ENCODE measurements at regions of chr22 and their contacts with region 1.

Region 1: GRCh38 chr22:46798366-46799350 is 36.2 kb downstream of the TBC1D22A start:
- DNase-seq: peak; percentile 90
- H3K4me3 ChIP-seq: peak overlapping the region in 1 of 2 experiments; percentile 27; a peak in 1 of 4 replicates
- H3K27ac ChIP-seq: no peak overlapping the region
- H3K4me1 ChIP-seq: peaks cover 0 to 3% of the 10 kb centered on the region in 2 experiments; a peak in 1 of 4 replicates
- H3K27me3 ChIP-seq: no peaks in the 10 kb centered on the region
- CTCF ChIP-seq: peak; percentile 95
- EP300 ChIP-seq: no peak
- RAD21 ChIP-seq: peak; percentile 96

Region 2: DNA sequence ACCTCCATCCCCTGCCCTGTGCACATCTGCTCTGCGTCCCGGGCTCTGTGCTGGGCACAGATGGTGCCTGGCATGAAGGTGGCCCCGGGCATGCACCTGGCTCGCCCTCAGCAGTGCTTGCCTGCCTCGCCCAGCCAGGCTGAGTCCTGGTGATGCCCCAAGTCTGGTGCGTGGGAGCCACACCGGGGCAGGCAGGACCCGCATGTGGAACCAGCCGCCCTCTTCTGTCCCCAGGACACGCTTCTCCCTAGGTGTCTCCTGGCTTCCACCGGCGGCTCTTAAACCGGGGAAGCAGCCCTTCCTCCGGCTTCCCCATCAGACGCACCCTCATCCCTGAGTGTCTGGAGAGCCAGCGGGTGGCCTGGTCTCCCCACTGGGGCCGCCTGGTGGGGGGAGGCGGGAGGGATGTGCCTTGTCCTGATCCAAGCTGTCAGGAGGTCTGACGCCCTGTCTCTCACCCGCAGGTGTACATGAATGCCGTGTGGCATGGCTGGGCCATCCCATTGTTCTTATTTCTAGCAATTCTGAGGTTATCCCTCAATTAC is 133.4 kb before region 1 on chr22:
- CTCF ChIA-PET with region 1: no interaction called
- POLR2A ChIA-PET with region 1: no interaction called
- DNase-seq: no peak
- H3K4me3 ChIP-seq: no peak overlapping the region
- H3K27ac ChIP-seq: no peak overlapping the region
- H3K4me1 ChIP-seq: peaks cover 0 to 37% of the 10 kb centered on the region in 2 experiments; a peak in 2 of 4 replicates
- H3K27me3 ChIP-seq: no peaks in the 10 kb centered on the region
- CTCF ChIP-seq: no peak
- EP300 ChIP-seq: no peak
- RAD21 ChIP-seq: no peak

Region 3: DNA sequence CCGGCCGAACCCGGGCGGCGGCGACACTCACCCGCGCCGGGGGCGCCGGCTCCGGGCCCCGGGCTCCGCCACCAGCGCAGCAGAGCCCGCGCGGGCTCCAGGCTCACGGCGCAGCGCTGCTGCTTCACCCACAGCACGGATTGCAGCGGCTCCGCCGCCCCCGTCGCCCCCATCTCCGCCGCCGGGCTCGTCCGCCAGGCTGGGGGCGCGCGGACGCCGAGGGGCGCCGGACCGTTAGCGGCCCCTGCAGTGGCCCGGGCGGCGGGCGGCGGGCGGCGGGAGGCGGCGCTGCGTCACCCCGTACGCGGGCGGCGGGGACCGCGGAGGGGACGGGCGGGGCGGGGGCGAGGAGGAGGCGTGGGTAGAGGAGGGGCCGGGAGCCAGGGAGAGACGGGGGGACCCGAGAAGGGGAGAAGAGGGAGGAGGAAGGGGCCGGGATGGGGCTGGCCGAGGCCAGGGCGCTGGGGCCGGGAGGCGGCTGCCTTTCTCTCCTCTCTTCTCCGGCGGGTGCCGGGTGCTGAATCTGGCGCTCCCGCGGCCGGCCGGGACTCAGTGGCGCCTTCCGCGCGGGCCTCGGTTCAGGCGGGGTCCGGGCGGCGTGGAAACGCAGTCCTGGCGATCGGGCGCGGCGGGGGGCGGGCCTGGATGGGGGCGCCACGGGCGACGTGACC is 60.5 kb before region 1 on chr22 and contains the start of gene CERK:
- CTCF ChIA-PET with region 1: no interaction called
- POLR2A ChIA-PET with region 1: no interaction called
- DNase-seq: peak; percentile 95
- H3K4me3 ChIP-seq: peak within 1 kb of the TSS; percentile 67 to 96
- H3K27ac ChIP-seq: peak within 1 kb of the TSS; percentile 52 to 90; a peak in 3 of 4 replicates
- H3K4me1 ChIP-seq: peaks cover 22 to 69% of the 10 kb centered on the region in 2 experiments
- H3K27me3 ChIP-seq: no peaks in the 10 kb centered on the region
- CTCF ChIP-seq: no peak; the same call in 1 of the 2 replicates
- EP300 ChIP-seq: no peak
- RAD21 ChIP-seq: no peak
- polyA plus RNA-seq, gene CERK: 32.6 and 33.4 TPM in 2 replicates

Region 4: DNA sequence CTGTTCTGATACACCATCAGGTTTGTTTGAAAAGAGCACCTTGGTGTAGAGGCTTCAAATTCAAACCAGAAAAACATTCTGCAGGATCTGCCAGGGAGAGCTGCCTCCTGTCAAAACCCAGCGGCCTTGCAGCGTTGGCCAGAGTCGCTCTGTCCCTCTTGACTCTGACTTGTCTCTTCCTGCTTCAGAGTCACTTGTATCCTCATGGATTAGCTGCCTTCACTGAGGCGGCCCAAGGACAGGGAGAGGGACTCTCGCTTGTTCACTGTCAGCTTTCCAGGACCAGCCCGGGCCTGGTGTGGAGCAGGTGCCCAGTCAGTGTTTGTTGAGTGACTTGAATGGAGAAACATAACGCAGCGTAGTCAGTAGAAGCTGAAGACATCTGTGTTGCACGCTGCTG is 18.2 kb before region 1 on chr22:
- CTCF ChIA-PET with region 1: interaction called, 13 read pairs
- POLR2A ChIA-PET with region 1: no interaction called
- DNase-seq: no peak
- H3K4me3 ChIP-seq: no peak overlapping the region
- H3K27ac ChIP-seq: no peak overlapping the region
- H3K4me1 ChIP-seq: no peaks in the 10 kb centered on the region; a peak in 1 of 4 replicates
- H3K27me3 ChIP-seq: no peaks in the 10 kb centered on the region
- CTCF ChIP-seq: no peak
- EP300 ChIP-seq: no peak
- RAD21 ChIP-seq: no peak

Region 5: DNA sequence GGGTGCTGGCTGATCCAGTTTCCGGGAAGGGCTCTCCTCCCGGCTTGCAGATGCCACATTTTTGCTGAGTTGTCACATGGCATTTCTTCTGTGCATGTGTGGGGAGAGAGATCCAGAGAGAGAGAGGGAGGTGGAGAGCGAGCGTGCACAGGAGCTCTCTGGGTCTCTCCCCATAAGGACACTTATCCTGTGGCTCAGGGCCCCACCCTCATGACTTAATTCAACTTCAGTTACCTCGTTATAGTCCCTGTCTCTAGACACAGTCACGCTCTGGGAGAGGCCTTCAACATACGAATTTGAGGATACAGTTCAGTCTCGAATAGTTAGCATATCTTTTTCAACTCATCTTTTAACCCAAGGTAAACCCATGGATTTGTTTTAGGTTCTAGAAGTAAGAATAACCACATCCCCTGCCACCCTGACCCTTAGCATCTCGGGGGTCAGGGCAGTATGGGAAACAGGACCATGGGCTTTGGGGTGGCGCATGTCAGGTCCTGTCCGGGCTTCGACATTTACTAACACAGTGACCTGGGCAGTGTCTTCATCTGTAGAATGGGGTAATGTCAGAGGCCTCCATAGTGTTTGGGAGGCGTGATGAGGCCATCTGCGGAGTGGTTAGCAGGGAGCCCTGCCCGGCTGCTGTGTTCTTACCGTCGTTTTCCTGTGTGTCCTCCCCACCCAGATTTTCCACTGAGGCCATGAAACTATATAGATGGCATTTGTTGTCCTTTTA is 10.7 kb after region 1 on chr22:
- CTCF ChIA-PET with region 1: interaction called, 26 read pairs
- POLR2A ChIA-PET with region 1: no interaction called
- DNase-seq: no peak
- H3K4me3 ChIP-seq: no peak overlapping the region
- H3K27ac ChIP-seq: no peak overlapping the region
- H3K4me1 ChIP-seq: peaks cover 0 to 3% of the 10 kb centered on the region in 2 experiments; a peak in 2 of 4 replicates
- H3K27me3 ChIP-seq: no peaks in the 10 kb centered on the region
- CTCF ChIP-seq: no peak
- EP300 ChIP-seq: no peak
- RAD21 ChIP-seq: no peak

Region 6: GRCh38 chr22:46815896-46816731 is 17.5 kb after region 1 on chr22:
- CTCF ChIA-PET with region 1: interaction called, 26 read pairs
- POLR2A ChIA-PET with region 1: no interaction called
- DNase-seq: no peak
- H3K4me3 ChIP-seq: no peak overlapping the region
- H3K27ac ChIP-seq: no peak overlapping the region
- H3K4me1 ChIP-seq: peaks cover 0 to 12% of the 10 kb centered on the region in 2 experiments; a peak in 2 of 4 replicates
- H3K27me3 ChIP-seq: no peaks in the 10 kb centered on the region
- CTCF ChIP-seq: no peak
- EP300 ChIP-seq: no peak
- RAD21 ChIP-seq: no peak

Region 7: DNA sequence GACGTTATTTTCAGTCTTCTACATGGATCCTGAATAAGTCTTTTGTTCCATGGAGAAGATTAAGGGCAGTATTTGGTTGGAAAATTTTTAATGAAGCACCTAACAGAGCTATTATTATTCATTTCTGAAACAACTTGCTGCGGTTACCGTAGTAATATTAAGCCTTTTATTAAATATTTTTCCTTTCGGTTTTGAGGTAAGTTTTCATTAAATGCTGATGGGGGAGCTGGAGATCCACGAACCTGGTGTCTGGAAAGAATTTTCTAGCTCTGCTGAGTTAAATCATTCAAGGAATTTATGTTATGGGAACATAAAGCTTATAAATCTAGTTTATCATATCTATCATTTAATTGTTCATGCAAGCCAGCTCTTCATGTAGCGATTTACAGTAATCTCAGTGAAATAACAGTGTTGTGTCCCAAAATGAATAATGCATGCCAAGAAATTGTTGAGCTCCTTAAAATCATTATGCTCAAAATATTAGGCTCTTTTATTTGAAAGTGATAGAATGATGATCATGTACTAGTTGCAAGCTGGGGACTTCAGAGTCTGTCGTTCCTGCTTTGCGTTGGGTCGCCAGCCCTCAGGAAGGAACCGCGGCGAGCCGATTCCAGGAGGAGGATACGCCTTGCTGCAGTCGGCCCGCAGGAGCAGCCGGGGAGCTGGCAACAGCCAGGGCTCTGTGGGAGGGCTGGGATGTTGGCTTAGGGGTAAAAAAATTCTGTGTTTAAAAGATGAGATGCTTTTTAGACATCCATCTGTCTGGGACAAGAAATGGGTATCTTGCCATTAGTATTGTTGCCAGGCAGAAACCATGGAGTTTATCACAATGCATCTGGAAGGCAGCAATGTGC is 46.9 kb after region 1 on chr22:
- CTCF ChIA-PET with region 1: interaction called, 14 read pairs
- POLR2A ChIA-PET with region 1: no interaction called
- DNase-seq: peak; percentile 46
- H3K4me3 ChIP-seq: no peak overlapping the region
- H3K27ac ChIP-seq: peak overlapping the region in 1 of 2 experiments; percentile 7; a peak in 1 of 4 replicates
- H3K4me1 ChIP-seq: peaks cover 0 to 28% of the 10 kb centered on the region in 2 experiments; a peak in 2 of 4 replicates
- H3K27me3 ChIP-seq: no peaks in the 10 kb centered on the region
- CTCF ChIP-seq: peak; percentile 62
- EP300 ChIP-seq: no peak
- RAD21 ChIP-seq: peak; percentile 78

Region 8: DNA sequence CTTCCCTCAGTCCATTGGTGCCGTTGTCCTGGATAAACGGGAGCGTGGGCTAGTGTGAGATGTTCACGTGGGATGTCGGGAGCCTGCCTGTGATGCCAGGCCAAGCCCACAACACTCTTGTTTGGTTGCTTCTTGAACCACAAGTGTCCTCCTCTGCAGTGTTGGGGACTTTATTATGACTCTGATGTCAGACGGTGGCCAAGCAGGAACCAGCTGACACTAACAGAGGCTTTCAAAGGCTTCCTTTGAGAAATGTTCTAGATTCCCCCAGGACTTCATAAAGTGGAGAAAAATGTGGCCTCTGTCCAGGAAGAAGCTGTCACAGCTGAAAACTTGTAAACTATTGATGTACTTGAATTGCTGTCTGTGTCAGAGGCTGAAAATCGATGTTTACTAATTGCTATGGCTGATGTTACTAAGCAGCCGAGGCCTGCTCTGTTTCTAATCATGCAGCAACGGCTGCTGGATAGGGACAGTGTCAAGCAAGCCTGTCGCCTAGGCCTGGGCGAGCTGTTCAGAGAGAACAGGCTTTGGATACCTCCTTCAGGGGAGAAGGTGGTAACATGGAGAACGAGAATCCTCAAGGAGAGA is 95.5 kb after region 1 on chr22:
- CTCF ChIA-PET with region 1: interaction called, 11 read pairs
- POLR2A ChIA-PET with region 1: no interaction called
- DNase-seq: peak; percentile 54
- H3K4me3 ChIP-seq: no peak overlapping the region
- H3K27ac ChIP-seq: peak overlapping the region in 1 of 2 experiments; percentile 36; a peak in 2 of 4 replicates
- H3K4me1 ChIP-seq: peaks cover 0 to 49% of the 10 kb centered on the region in 2 experiments; a peak in 2 of 4 replicates
- H3K27me3 ChIP-seq: no peaks in the 10 kb centered on the region
- CTCF ChIP-seq: no peak
- EP300 ChIP-seq: no peak
- RAD21 ChIP-seq: no peak

Region 9: DNA sequence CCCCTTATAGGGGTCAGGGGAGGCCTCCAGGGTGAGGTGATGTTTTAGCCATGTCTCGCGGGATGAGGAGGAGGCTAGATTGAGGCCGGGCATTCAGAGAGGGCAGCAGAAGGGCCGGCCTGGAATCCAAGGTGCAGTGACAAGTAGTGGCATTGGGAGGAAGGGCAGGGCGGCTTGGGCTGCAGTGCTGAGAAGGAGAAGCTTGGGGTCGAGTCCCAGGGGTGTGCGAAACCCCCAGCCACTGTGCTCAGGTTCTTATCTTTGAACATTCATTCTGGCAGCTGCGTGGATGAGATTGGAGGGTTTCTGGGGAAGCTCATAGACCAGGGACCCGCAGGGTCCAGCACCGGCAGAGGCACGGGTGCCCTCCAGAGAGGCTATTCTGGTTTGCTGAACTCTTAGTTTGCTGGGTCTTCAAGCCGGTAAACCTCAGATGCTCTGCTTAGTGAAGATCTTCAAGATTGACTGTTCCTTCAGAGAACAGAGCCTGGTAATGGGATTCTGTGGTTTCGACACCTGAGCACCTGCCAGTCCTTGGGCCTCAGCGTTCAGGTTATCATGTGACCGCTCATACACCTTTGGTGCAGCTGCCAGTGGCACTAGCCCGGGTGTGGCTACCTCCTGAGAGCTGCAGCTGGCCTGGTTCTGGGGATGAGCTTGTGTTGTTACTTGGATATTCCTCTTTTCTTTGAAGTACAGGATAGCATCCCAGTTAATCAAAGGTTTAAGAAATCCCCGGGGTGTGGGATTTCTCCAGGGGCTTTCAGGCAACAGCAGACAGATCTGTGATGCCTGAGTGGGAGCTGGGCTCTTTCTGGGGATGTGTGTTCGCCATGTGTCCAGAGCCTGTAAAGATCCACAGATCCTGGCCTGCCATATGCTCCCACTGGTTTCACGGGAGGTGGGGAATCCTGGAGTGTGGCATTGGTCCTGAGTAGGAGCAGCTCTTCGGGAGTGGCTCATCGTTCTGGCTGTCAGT is 116.5 kb after region 1 on chr22:
- CTCF ChIA-PET with region 1: no interaction called
- POLR2A ChIA-PET with region 1: no interaction called
- DNase-seq: no peak
- H3K4me3 ChIP-seq: no peak overlapping the region
- H3K27ac ChIP-seq: no peak overlapping the region
- H3K4me1 ChIP-seq: no peaks in the 10 kb centered on the region
- H3K27me3 ChIP-seq: no peaks in the 10 kb centered on the region
- CTCF ChIP-seq: no peak
- EP300 ChIP-seq: no peak
- RAD21 ChIP-seq: no peak

Region 10: DNA sequence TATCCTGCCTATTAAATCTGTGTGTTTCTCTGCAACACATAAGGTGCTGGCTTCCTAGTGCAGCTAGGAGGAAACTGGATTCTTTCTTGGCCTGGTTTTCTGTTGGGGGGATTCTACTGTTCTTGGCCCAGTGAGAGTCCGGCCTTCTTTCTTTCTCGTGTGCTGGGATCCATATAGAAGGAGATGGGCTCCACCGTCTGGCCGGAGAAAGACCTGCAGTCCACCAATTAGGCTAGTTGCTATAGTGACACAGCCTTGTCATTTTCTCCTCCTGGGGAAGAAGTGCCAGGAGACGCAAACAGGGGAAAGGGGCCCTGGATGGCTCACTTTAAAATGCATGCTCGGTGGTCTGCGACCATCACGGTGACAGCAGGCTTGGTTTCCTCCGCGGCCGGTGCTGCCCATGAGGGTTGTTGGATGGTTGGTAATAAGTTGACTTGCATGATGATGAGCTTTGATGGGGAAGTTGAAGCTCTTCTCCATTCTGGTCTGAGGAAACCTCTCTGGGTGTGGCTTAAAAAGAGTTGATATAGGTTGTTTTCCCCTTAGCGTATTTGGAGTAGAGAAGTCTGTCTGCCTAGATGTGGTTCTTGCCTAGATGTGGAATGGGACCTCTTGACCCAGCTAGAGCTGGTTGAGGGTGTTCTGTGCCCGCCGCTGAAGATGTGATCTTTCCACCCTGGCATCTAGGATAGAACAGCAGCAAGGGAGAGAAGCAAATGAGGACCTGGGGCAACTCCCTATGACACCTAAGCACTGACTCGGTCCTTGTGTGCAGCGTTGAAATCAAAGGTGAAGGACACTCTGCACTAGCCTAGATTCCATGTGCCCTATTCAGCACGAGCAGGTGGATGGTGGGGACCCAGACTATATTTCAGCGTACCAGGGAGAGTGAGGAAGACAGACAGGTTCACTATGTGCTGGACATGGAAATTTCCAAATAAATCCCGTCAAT is 1694.0 kb after region 1 on chr22:
- CTCF ChIA-PET with region 1: interaction called, 10 read pairs
- POLR2A ChIA-PET with region 1: no interaction called
- DNase-seq: peak; percentile 84
- H3K4me3 ChIP-seq: no peak overlapping the region; a peak in 1 of 4 replicates
- H3K27ac ChIP-seq: no peak overlapping the region
- H3K4me1 ChIP-seq: no peaks in the 10 kb centered on the region; a peak in 1 of 4 replicates
- H3K27me3 ChIP-seq: peaks cover 38% of the 10 kb centered on the region; the same call in 1 of the 2 replicates
- CTCF ChIP-seq: peak; percentile 78
- EP300 ChIP-seq: no peak
- RAD21 ChIP-seq: peak; percentile 83

Measured in SK-N-SH (cell line).